Ascending aorta (tissue), 2 donors: ENCODE measurements at regions of chr19 and their contacts with region 1.

Region 1: DNA sequence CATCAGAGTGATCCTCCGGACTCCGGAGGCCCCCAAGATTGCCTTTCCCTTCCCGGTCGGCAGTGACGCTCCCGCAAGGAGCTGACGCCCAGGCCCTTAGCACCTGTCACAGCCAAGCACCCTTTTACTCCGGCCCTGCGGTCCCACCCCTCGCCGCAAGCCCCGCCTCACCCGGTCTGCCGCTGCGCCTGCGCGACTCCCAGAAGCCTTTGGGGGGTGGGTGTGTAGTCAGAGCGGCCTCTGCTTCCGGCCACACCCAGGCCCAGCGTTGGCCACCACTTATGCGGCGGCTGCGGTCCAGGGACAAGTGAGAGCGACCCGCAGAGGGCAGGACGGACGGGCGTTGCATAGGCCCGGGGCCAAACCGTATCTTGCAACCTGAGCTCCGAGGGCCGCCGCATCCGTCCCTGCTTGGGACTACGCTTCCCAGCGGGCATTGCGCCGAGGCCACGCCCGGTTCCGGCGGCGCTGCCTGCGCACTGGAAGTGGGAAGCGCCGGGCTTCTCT is 441 bp upstream of the ZFP28 start:
- DNase-seq: peak; percentile 45 to 93
- H3K4me3 ChIP-seq: peak overlapping the region; percentile 85 to 92
- H3K27ac ChIP-seq: peak overlapping the region; percentile 91 to 94
- H3K4me1 ChIP-seq: peaks cover 0 to 10% of the 10 kb centered on the region in 2 donors
- H3K27me3 ChIP-seq: no peaks in the 10 kb centered on the region
- CTCF ChIP-seq: no peak

Region 2: GRCh38 chr19:56393119-56394012 is 144.9 kb before region 1 on chr19 and contains the start of gene ZNF582:
- intact Hi-C with region 1: loop called (anchors 1 kb)
- DNase-seq: peak; percentile 89 to 98
- H3K4me3 ChIP-seq: peak within 1 kb of the TSS; percentile 67 to 85
- H3K27ac ChIP-seq: peak within 1 kb of the TSS; percentile 91 to 93
- H3K4me1 ChIP-seq: peaks cover 0 to 3% of the 10 kb centered on the region in 2 donors
- H3K27me3 ChIP-seq: no peaks in the 10 kb centered on the region
- CTCF ChIP-seq: peak; percentile 49 to 80 (median 69)
- total RNA-seq, gene ZNF582: 0.43 TPM

Region 3: DNA sequence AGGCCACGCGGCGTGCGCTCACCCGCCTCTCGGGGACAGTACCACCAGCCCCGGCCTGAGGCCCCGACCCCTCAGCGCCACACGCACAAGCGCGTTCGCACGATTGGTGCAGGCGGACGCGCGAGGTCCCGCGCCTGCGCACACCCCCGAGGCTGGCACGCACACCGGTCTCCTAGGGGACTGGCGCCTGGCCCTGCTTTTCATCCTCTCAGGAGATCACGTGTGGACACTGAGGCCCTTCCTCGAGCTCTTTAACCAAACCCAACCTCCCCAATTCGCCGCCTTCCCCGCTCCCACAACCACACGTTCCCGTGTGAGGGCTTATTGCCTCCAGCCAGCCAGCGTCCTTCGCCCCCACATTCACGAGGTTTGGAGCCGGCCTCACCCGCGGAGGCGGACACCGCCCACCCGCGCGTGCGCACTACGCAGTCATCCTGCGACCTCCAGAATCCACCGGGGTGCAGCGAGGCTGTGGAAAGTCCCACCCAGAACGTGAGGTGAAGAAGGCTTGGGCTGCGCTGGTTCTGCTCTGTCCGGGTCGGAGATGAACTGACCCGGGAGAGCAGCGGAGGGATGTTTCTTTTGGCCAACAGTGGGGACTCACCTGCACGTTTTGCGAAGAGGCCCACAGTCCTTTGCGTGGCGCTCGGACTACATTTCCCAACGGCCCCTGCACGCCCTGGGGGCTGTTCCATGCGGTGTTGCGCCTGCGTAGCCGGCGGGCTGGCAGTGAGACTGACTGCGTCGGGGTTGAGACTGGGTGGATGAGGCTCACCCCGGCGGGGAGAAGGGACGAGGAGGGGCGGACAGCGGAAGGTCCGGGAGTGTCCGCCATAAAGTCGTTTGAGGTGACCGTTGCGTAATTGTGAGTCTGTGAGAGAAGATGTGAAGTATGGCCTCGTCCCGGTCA is 60.6 kb before region 1 on chr19:
- intact Hi-C with region 1: loop called (anchors 2 kb)
- DNase-seq: peak; percentile 57 to 91
- H3K4me3 ChIP-seq: peak overlapping the region; percentile 61 to 80
- H3K27ac ChIP-seq: peak overlapping the region; percentile 52 to 84
- H3K4me1 ChIP-seq: peaks cover 0 to 7% of the 10 kb centered on the region in 2 donors
- H3K27me3 ChIP-seq: no peaks in the 10 kb centered on the region
- CTCF ChIP-seq: no peak

Region 4: GRCh38 chr19:56567274-56568120 is 29.2 kb after region 1 on chr19 and contains the start of gene ZNF470:
- intact Hi-C with region 1: loop called (anchors 1 kb)
- DNase-seq: peak; percentile 82 to 97
- H3K4me3 ChIP-seq: peak within 1 kb of the TSS; percentile 82 to 90
- H3K27ac ChIP-seq: peak within 1 kb of the TSS; percentile 76 to 80
- H3K4me1 ChIP-seq: peaks cover 0 to 4% of the 10 kb centered on the region in 2 donors
- H3K27me3 ChIP-seq: no peaks in the 10 kb centered on the region
- CTCF ChIP-seq: no peak
- total RNA-seq, gene ZNF470: 0.21 TPM

Region 5: GRCh38 chr19:56577719-56578602 is 39.7 kb after region 1 on chr19:
- intact Hi-C with region 1: no loop called
- DNase-seq: no peak
- H3K4me3 ChIP-seq: no peak overlapping the region
- H3K27ac ChIP-seq: no peak overlapping the region
- H3K4me1 ChIP-seq: no peaks in the 10 kb centered on the region
- H3K27me3 ChIP-seq: no peaks in the 10 kb centered on the region
- CTCF ChIP-seq: no peak